ENCODE measurements at regions of chr11 and their contacts with region 1.

Region 1: DNA sequence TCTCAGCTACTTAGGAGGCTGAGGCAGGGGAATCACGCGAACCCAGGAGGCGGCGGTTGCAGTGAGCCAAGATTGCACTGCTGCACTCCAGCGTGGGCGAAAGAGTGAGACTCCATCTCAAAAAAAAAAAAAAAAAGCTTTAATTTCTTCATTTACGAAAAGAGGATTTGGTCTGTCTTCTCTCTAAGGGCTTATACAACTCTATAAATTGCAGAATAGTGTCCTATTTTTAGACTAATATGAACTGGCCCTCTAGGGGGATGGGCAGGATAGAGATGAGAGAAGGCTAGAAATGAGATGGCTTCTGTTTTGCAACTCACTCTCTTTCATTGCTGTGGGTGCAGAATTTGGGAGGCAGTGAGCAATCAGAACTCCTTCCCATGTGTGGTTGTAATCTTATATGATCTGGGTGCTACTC is 11.3 kb downstream of the MAML2 start:
- DNase-seq: no peak
- H3K4me3 ChIP-seq: no peak overlapping the region
- H3K27ac ChIP-seq: no peak overlapping the region
- H3K4me1 ChIP-seq: peaks cover 3 to 22% (median 18%) of the 10 kb centered on the region in 4 experiments; a peak in 5 of 7 replicates
- H3K27me3 ChIP-seq: no peaks in the 10 kb centered on the region
- CTCF ChIP-seq: no peak
- EP300 ChIP-seq: no peak
- POLR2A ChIP-seq: no peak
- RAD21 ChIP-seq: no peak

Region 2: GRCh38 chr11:96294289-96294688 is 37.4 kb before region 1 on chr11:
- CTCF ChIA-PET with region 1: no interaction called
- POLR2A ChIA-PET with region 1: no interaction called
- DNase-seq: no peak
- H3K4me3 ChIP-seq: no peak overlapping the region
- H3K27ac ChIP-seq: no peak overlapping the region
- H3K4me1 ChIP-seq: peaks cover 0 to 3% (median 0%) of the 10 kb centered on the region in 4 experiments; a peak in 1 of 7 replicates
- H3K27me3 ChIP-seq: peaks cover 0 to 1% (median 0%) of the 10 kb centered on the region in 4 experiments; a peak in 1 of 7 replicates
- CTCF ChIP-seq: no peak
- EP300 ChIP-seq: no peak
- POLR2A ChIP-seq: no peak
- RAD21 ChIP-seq: no peak

Region 3: GRCh38 chr11:96306933-96307775 is 24.6 kb before region 1 on chr11:
- CTCF ChIA-PET with region 1: interaction called, 11 read pairs
- POLR2A ChIA-PET with region 1: no interaction called
- DNase-seq: no peak
- H3K4me3 ChIP-seq: peak overlapping the region in 1 of 4 experiments; percentile 37; a peak in 2 of 8 replicates
- H3K27ac ChIP-seq: no peak overlapping the region
- H3K4me1 ChIP-seq: peaks cover 0 to 17% (median 10%) of the 10 kb centered on the region in 4 experiments; a peak in 4 of 7 replicates
- H3K27me3 ChIP-seq: no peaks in the 10 kb centered on the region
- CTCF ChIP-seq: no peak
- EP300 ChIP-seq: no peak
- POLR2A ChIP-seq: no peak
- RAD21 ChIP-seq: no peak

Measured in H1 (cell line).